ENCODE measurements at regions of chr1 and their contacts with region 1.

Region 1: GRCh38 chr1:88973520-88974137 is 18.8 kb downstream of the KYAT3 start:
- DNase-seq: no peak
- ATAC-seq: no peak
- H3K4me3 Mint-ChIP-seq: no peak overlapping the region
- H3K27ac Mint-ChIP-seq: no peak overlapping the region
- H3K4me1 Mint-ChIP-seq: peaks cover 33% of the 10 kb centered on the region
- H3K27me3 Mint-ChIP-seq: no peaks in the 10 kb centered on the region

Region 2: GRCh38 chr1:88983791-88984559 is 10.3 kb after region 1 on chr1:
- CTCF ChIA-PET with region 1: interaction called, 79 read pairs
- POLR2A ChIA-PET with region 1: no interaction called
- DNase-seq: peak; percentile 43
- ATAC-seq: peak; percentile 76
- H3K4me3 Mint-ChIP-seq: peak overlapping the region; percentile 48
- H3K27ac Mint-ChIP-seq: peak overlapping the region; percentile 56
- H3K4me1 Mint-ChIP-seq: peaks cover 69% of the 10 kb centered on the region
- H3K27me3 Mint-ChIP-seq: no peaks in the 10 kb centered on the region

Region 3: GRCh38 chr1:88990426-88990825 is 16.8 kb after region 1 on chr1:
- CTCF ChIA-PET with region 1: interaction called, 79 read pairs
- POLR2A ChIA-PET with region 1: no interaction called
- DNase-seq: no peak
- ATAC-seq: no peak
- H3K4me3 Mint-ChIP-seq: peak overlapping the region; percentile 12
- H3K27ac Mint-ChIP-seq: no peak overlapping the region
- H3K4me1 Mint-ChIP-seq: peaks cover 34% of the 10 kb centered on the region
- H3K27me3 Mint-ChIP-seq: no peaks in the 10 kb centered on the region

Region 4: DNA sequence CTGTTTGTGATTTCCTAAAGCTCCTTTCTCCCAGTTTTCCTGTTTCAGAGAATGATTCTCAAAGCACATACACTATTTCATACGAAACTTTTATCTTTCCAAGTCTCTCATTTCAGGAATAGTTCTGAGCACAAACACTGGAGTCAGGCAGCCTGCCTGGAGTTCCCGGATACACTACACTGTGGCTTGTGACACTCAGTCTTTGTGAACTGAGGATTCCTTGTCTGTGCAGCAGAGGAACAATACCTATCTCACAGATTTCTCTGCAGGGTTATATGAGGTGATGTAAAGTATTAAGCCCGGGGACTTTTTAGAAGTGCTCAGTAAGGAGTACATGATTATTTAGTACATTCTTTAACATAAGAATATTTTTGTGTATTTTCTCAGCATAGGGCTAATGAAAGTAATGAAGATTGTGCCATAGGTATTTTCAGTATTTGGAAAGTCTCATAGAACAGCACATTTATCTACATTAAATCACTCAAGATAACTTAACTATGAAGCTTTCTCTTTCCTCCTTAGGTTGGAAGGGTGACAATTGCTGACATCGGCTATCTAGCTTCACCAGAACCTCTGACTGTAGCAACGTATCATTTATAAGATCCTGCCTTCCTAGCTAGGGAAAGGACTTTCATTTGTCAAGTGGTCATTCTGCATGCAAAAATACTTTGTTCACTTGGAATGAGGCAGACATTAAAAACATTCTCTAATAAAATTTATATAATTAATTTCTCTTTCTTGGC is 139.4 kb after region 1 on chr1:
- CTCF ChIA-PET with region 1: no interaction called
- POLR2A ChIA-PET with region 1: no interaction called
- DNase-seq: no peak
- ATAC-seq: no peak
- H3K4me3 Mint-ChIP-seq: no peak overlapping the region
- H3K27ac Mint-ChIP-seq: no peak overlapping the region
- H3K4me1 Mint-ChIP-seq: peaks cover 11% of the 10 kb centered on the region
- H3K27me3 Mint-ChIP-seq: no peaks in the 10 kb centered on the region